Activated CD4-positive, alpha-beta T cell treated with anti-CD3 and anti-CD28 coated beads, Interleukin-2, amount 10 ng/mL, durations not matched to agents 24 days and 14 days (primary cell): ENCODE measurements at regions of chr6 and their contacts with region 1.

Region 1: DNA sequence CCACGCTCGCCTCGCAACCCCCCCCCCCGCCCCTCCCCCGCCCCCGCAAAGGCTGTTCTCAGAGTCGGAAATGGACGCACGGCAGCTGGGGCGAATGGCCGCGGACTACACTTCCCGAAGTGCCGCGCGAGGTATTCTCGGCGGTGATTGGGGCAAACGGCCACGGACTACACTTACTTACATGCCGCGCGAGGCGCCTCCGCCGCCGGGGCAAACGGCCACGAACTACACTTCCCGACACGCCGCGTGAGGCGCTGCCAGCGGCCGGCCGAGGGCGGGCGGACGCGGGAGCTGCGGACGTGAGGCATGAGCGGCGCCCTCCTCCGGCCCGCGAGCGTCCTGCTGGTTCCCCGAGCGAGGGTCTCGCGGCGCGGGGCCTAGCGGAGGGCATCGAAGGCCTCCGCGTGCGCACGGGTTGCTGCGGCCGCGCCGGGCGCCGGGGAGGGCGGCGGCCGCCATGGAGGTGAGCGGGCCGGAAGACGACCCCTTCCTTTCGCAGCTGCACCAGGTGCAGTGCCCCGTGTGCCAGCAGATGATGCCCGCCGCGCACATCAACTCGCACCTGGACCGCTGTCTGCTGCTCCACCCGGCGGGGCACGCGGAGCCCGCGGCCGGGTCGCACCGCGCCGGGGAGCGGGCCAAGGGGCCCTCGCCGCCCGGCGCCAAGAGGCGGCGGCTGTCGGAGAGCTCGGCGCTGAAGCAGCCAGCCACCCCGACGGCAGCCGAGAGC is at the start of gene WRNIP1:
- DNase-seq: peak; percentile 99
- H3K4me3 Mint-ChIP-seq: peak within 1 kb of the TSS; percentile 88
- H3K27ac Mint-ChIP-seq: peak within 1 kb of the TSS; percentile 95
- H3K4me1 Mint-ChIP-seq: peaks cover 45% of the 10 kb centered on the region
- H3K27me3 Mint-ChIP-seq: no peaks in the 10 kb centered on the region
- total RNA-seq, gene WRNIP1: 49.3 and 50.5 TPM in 2 replicates

Region 2: DNA sequence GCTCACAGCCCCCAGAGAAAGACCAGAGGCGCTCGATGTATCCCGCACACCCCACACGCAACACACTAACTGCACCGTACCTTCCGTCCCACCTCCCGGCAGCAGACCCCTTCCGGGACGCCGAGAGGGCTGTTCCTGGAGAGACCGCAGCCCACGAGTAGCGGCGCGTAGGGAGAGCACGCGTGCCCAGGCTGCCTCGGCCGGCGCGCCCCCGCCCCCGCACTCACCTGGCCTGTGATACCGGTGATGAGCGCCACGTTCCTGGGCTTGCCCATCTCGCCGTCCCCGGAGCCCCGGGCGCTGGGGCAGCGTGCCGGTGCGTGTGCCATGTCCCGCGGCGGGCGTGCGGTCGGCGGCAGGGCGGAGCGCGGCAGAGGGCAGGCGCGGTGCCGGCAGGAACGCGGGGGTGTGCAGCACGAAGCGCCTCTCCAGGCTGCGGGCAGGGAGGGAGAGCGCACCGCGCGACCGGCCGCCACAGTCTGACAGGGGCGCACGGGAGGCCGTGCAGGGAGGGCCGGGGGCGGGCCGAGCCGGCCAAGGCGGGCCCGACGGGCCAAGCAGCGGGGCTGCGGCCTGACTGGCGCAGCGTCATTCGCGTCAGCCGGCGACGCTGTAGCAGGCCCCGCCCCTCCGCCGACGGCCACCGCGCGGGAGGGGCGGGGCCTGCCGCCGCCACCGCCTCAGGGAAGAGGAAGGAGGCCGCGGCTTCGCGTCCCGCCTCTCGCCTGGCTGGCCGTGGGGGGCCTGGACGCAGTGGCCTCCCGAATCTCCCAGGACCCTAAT is 520.0 kb before region 1 on chr6 and contains the start of gene GMDS:
- intact Hi-C with region 1: loop called (anchors 5 kb)
- DNase-seq: peak; percentile 96
- H3K4me3 Mint-ChIP-seq: peak within 1 kb of the TSS; percentile 93
- H3K27ac Mint-ChIP-seq: peak within 1 kb of the TSS; percentile 95
- H3K4me1 Mint-ChIP-seq: peaks cover 54% of the 10 kb centered on the region
- H3K27me3 Mint-ChIP-seq: no peaks in the 10 kb centered on the region
- total RNA-seq, gene GMDS: 38.2 and 47.4 TPM in 2 replicates

Region 3: DNA sequence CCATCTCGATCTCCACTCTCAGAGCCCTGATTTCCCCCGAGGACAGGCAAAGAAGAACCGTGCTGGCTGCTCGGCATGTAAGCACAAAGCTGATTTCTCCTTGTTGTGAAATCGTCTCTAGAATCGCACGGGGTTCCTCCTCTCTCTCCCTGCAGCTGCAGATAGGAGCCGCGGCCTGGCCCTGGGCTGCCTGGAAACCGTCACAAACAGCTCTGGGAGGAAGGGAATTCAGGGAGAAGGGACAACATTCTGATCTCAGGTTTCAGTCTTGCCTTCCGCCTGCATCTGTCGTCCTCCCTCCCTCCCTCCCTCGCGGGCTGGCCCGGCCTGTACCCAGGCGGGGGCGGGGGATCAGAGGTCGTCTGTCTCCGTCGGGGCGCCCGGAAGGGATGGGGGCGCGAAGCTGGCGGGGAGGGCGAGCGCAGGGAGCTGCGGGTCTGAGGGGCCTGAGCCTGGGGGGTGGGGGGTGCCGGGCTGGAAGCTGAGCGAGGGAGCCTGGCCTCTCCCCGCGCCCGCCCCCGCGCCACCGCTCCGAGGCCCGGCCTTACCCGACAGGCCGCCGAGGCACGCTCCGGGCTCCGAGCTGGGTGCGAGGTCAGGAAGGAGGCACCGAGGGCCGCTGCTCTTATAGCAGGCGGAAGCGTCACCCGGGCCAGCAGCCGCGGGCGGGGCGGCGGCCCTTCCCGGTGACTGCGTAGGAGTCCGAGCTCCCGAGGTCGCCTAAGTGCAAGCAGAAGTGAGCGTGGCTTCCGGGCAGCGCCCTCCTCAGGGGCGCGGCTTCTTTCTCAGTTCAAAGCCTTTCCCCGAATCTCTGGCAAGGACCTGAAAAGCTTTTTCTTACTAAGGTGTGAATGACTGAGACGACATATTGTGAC is 76.2 kb after region 1 on chr6 and contains the start of gene SERPINB1:
- intact Hi-C with region 1: loop called (anchors 1 kb)
- DNase-seq: peak; percentile 94
- H3K4me3 Mint-ChIP-seq: peak within 1 kb of the TSS; percentile 91
- H3K27ac Mint-ChIP-seq: peak within 1 kb of the TSS; percentile 88
- H3K4me1 Mint-ChIP-seq: peaks cover 57% of the 10 kb centered on the region
- H3K27me3 Mint-ChIP-seq: no peaks in the 10 kb centered on the region
- total RNA-seq, gene SERPINB1: 76.1 and 79.9 TPM in 2 replicates

Region 4: DNA sequence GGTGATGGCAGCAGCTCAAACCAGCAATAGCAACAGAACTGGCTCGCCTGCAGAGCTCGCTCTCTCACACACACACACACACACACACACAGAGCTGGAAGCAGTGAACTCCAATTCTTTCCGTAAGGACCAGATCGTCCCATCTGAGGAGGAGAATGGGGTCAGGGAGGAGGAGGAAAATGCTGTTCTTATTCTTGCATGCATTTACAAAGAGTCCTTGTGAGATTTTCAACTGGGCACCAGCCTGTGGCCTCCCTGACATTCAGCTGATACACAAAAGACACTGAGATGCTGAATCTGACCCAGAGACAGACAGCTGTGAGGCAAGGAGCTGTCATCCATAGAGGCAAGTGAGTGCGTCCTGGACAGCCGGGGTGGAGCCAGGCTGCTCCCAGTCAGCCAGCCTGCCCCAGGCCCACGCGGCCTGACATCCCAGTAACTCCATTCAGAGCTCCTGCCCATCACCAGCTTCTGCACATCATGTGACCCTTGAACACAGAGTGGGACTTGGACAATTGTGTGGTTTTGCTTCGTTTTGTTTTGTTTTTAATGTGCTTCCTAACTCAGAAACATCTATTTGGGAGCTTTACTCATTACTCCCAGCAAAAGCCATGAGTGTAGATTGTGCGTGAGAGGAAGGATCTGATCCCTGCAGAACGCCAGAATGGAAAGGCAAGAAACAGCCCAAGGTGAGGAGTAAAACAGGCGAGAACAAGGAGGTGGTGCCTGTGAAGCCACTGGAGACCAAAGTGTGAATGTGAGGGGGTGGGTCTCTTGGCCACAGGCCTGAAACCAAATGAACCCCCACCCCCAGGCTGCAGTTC is 135.7 kb after region 1 on chr6:
- intact Hi-C with region 1: loop called (anchors 5 kb)
- DNase-seq: peak; percentile 63
- H3K4me3 Mint-ChIP-seq: peak overlapping the region; percentile 97
- H3K27ac Mint-ChIP-seq: peak overlapping the region; percentile 90
- H3K4me1 Mint-ChIP-seq: peaks cover 51% of the 10 kb centered on the region
- H3K27me3 Mint-ChIP-seq: no peaks in the 10 kb centered on the region

Region 5: GRCh38 chr6:2988426-2989331 is 223.3 kb after region 1 on chr6:
- intact Hi-C with region 1: loop called (anchors 1 kb)
- DNase-seq: peak; percentile 93
- H3K4me3 Mint-ChIP-seq: peak overlapping the region; percentile 89
- H3K27ac Mint-ChIP-seq: peak overlapping the region; percentile 99
- H3K4me1 Mint-ChIP-seq: peaks cover 22% of the 10 kb centered on the region
- H3K27me3 Mint-ChIP-seq: peaks cover 3% of the 10 kb centered on the region

Region 6: GRCh38 chr6:3068329-3069214 is 303.2 kb after region 1 on chr6 and contains the start of gene RIPK1:
- intact Hi-C with region 1: loop called (anchors 1 kb)
- DNase-seq: peak; percentile 99
- H3K4me3 Mint-ChIP-seq: peak within 1 kb of the TSS; percentile 98
- H3K27ac Mint-ChIP-seq: peak within 1 kb of the TSS; percentile 97
- H3K4me1 Mint-ChIP-seq: peaks cover 47% of the 10 kb centered on the region
- H3K27me3 Mint-ChIP-seq: no peaks in the 10 kb centered on the region
- total RNA-seq, gene RIPK1: 17.0 and 17.9 TPM in 2 replicates